ENCODE measurements at regions of chr11 and their contacts with region 1.

Region 1: GRCh38 chr11:1640076-1640946 is 10.7 kb downstream of the KRTAP5-5 start:
- DNase-seq: peak; percentile 18
- H3K4me3 Mint-ChIP-seq: no peak overlapping the region
- H3K27ac Mint-ChIP-seq: no peak overlapping the region
- H3K4me1 Mint-ChIP-seq: no peaks in the 10 kb centered on the region
- H3K27me3 Mint-ChIP-seq: no peaks in the 10 kb centered on the region

Region 2: DNA sequence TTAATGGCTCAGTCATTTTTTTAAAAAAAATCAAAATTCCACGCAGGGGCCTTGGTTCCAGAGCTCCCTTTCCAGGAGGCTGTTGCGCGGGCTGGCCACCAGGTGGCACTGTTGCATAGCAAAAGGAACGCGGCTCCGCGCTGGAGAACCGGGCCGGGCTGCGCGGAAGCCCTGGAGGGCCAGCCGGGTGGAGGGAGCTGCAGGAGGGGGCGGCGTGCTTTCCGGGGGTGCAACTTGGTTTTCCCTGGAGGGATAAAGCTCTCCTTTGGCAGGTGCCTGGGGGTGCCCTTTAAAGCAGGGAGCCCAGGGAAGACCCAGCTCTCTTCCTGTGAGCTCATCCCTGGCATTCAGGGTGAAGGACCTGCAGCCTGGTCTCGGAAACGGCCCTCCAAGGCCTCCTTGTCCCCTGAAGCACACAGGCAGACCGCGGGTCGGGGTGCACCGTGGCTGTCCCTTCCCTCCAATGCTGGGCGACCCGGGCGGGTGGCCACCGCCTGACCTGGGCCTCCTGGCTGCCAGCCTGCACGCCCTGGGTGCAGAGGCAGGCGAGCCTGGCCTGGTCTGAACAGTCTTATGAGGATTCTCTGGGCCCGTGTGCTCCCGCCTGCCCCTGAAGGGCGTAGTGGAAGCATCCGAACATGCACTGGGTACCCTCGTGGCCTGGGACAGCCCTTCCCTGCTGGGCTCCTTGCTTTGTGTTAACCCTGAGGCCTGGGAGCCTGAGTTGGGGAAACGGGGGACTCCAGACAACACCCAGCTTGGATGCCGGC is 12.6 kb after region 1 on chr11:
- CTCF ChIA-PET with region 1: interaction called, 16 read pairs
- POLR2A ChIA-PET with region 1: no interaction called
- DNase-seq: peak; percentile 77
- H3K4me3 Mint-ChIP-seq: no peak overlapping the region
- H3K27ac Mint-ChIP-seq: no peak overlapping the region
- H3K4me1 Mint-ChIP-seq: no peaks in the 10 kb centered on the region
- H3K27me3 Mint-ChIP-seq: peaks cover 3% of the 10 kb centered on the region

Measured in activated CD4-positive, alpha-beta T cell treated with anti-CD3 and anti-CD28 coated beads, Interleukin-2, amount 10 ng/mL, durations not matched to agents 7 days and 5 days (primary cell).